Calu3 (cell line): ENCODE measurements at regions of chr19 and their contacts with region 1.

Region 1: GRCh38 chr19:46283771-46284170 is 13.1 kb upstream of the HIF3A start:
- DNase-seq: no peak
- H3K4me3 Mint-ChIP-seq: no peak overlapping the region
- H3K27ac Mint-ChIP-seq: no peak overlapping the region
- H3K4me1 Mint-ChIP-seq: no peaks in the 10 kb centered on the region
- H3K27me3 Mint-ChIP-seq: peaks cover 11% of the 10 kb centered on the region
- CTCF ChIP-seq: no peak

Region 2: DNA sequence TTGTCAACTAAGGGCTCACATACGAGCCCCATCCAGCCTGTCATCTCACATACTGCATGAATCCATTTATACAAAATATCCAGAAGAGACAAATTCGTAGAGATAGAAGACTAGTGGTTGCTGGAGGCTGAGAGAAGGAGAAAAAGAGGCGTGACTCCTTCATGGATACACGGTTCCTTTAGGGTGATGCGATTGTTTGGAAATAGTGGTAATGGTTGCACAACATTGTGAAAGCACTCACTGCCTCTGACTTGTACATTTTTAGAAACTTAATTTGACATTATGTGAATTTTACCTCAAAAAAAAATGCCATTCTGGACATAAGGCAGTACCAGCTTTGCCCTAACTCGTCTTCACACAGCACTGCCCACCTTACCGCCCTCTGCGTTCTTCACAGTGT is 26.9 kb before region 1 on chr19:
- CTCF ChIA-PET with region 1: no interaction called
- intact Hi-C with region 1: no loop called
- DNase-seq: no peak
- H3K4me3 Mint-ChIP-seq: no peak overlapping the region
- H3K27ac Mint-ChIP-seq: no peak overlapping the region
- H3K4me1 Mint-ChIP-seq: peaks cover 9% of the 10 kb centered on the region
- H3K27me3 Mint-ChIP-seq: peaks cover 90% of the 10 kb centered on the region
- CTCF ChIP-seq: no peak

Region 3: DNA sequence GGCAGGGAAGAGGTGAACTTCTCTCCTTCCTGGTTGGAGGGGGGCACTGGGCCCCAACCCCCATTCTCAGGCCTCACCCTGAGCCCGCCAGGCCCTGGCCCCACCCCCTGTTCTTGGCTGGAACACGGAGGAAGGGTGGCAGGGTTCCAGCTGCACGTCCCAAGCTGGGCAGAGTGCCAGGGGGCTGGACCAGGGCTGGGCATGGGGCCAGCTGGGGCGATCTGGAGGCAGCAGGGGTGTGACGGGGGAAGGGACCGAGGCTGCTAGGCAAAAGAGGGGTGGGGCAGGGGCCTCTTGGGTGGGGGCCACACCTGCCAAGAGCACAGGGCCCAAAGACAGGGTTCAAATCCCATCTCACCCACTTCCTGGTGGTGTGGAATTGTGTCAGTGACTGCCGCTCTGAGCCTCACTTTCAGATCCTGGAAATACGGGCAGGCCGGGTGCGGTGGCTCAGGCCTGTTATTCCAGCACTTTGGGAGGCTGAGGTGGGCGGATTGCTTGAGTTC is 15.3 kb after region 1 on chr19:
- CTCF ChIA-PET with region 1: interaction called, 19 read pairs
- intact Hi-C with region 1: no loop called
- DNase-seq: peak; percentile 99
- H3K4me3 Mint-ChIP-seq: peak overlapping the region; percentile 61
- H3K27ac Mint-ChIP-seq: peak overlapping the region; percentile 90
- H3K4me1 Mint-ChIP-seq: peaks cover 30% of the 10 kb centered on the region
- H3K27me3 Mint-ChIP-seq: peaks cover 31% of the 10 kb centered on the region
- CTCF ChIP-seq: no peak

Region 4: DNA sequence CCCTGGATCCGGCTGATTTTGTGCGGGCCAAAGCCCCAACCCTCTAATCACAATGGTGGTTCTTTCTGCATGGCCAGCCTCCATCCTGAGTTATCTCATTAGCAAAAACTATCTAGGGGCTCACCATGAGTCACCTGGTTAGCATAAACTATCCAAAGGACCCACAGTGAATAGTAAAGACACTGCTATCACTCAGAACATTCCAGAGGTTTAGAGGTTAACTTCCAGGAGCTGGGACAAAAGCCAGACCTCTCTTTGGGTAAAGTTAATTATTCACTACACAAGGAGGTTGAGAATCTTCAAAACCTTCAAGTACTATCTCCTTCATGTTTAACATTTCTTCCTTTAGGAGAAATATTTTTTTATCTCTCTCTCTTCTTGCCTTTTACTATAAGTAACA is 44.3 kb after region 1 on chr19:
- CTCF ChIA-PET with region 1: no interaction called
- intact Hi-C with region 1: no loop called
- DNase-seq: no peak
- H3K4me3 Mint-ChIP-seq: no peak overlapping the region
- H3K27ac Mint-ChIP-seq: no peak overlapping the region
- H3K4me1 Mint-ChIP-seq: no peaks in the 10 kb centered on the region
- H3K27me3 Mint-ChIP-seq: peaks cover 17% of the 10 kb centered on the region
- CTCF ChIP-seq: no peak

Region 5: DNA sequence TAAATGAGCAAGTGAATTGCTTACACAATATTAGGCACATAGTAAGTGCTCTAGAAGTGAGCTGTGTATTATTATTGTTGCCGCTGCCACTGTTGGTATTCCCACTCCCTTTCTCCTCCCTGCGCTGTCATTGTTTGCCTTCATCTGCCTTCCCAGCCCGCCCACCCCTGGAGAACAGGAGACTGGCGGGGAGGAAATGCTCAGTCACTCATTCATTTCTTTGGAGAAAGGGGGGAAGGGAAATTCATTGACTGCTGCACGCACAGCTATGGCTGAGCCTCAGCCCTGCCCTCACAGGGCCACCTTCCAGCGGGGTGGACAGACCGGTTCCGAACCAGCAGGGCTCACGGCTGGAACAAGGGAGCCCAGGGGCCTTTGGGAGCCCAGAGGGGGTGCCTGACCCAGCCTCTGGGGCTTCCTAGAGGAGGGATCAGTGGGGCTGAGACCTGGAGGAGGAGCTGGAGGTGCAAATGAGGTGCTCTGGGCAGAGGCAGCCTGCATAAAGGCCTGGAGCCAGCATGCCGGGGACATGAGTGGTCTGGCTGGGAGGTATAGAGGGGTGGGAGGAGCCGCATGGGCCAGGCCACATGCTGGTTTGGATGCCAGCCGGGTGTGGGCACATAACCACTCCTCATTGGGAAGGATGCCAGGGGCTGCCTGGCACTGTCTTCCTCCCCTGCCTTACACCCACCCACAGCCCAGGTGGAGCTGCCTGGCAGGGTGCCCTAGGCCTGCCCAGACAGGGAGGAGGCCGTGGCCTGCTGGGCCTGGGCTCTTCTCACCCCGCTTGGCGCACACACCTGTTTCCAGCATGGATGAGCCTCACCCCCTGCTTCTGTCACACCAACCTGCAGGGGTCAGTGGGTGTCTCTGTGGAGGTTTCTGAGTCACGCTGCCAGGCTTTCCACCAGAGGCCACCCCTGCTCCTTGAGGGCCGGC is 89.9 kb after region 1 on chr19:
- CTCF ChIA-PET with region 1: interaction called, 13 read pairs
- intact Hi-C with region 1: loop called (anchors 2 kb)
- DNase-seq: peak; percentile 99
- H3K4me3 Mint-ChIP-seq: peak overlapping the region; percentile 71
- H3K27ac Mint-ChIP-seq: peak overlapping the region; percentile 90
- H3K4me1 Mint-ChIP-seq: peaks cover 47% of the 10 kb centered on the region
- H3K27me3 Mint-ChIP-seq: no peaks in the 10 kb centered on the region
- CTCF ChIP-seq: no peak

Region 6: GRCh38 chr19:46392243-46392801 is 108.6 kb after region 1 on chr19:
- CTCF ChIA-PET with region 1: interaction called, 5 read pairs
- intact Hi-C with region 1: loop called (anchors 2 kb)
- DNase-seq: no peak
- H3K4me3 Mint-ChIP-seq: no peak overlapping the region
- H3K27ac Mint-ChIP-seq: no peak overlapping the region
- H3K4me1 Mint-ChIP-seq: no peaks in the 10 kb centered on the region
- H3K27me3 Mint-ChIP-seq: no peaks in the 10 kb centered on the region
- CTCF ChIP-seq: no peak

Region 7: GRCh38 chr19:46404055-46404752 is 120.4 kb after region 1 on chr19:
- CTCF ChIA-PET with region 1: interaction called, 4 read pairs
- intact Hi-C with region 1: loop called (anchors 2 kb)
- DNase-seq: peak; percentile 64
- H3K4me3 Mint-ChIP-seq: peak overlapping the region; percentile 80
- H3K27ac Mint-ChIP-seq: peak overlapping the region; percentile 78
- H3K4me1 Mint-ChIP-seq: peaks cover 28% of the 10 kb centered on the region
- H3K27me3 Mint-ChIP-seq: peaks cover 36% of the 10 kb centered on the region
- CTCF ChIP-seq: peak; percentile 46

Region 8: GRCh38 chr19:46487802-46488445 is 204.2 kb after region 1 on chr19:
- CTCF ChIA-PET with region 1: interaction called, 9 read pairs
- intact Hi-C with region 1: loop called (anchors 1 kb)
- DNase-seq: peak; percentile 86
- H3K4me3 Mint-ChIP-seq: peak overlapping the region; percentile 10
- H3K27ac Mint-ChIP-seq: no peak overlapping the region
- H3K4me1 Mint-ChIP-seq: peaks cover 10% of the 10 kb centered on the region
- H3K27me3 Mint-ChIP-seq: peaks cover 85% of the 10 kb centered on the region
- CTCF ChIP-seq: peak; percentile 96

Region 9: DNA sequence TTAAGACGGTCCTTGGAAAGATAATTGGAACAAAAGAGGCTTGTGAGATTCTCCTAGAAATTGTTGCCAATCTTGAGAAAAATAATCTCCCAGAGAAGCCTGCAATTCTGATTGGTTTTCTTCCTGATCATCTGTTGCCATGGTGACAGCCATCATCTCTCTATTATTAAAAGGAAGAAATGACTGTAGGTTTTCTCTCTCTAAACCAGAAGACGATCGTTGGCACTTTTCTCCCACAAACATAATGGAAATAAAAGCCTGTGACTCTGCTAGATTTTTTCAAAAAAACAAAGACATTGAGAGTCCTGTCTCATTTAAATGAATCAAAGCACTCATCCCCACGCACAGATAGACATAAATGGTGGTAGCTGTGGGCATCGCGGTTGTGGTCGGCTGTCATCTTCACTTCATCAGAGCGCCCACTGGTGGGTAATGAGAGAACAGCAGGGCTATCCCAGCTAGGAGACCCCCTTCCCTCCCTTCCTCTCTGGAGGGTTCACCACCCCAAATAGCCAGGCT is 295.6 kb after region 1 on chr19:
- CTCF ChIA-PET with region 1: no interaction called
- intact Hi-C with region 1: no loop called
- DNase-seq: no peak
- H3K4me3 Mint-ChIP-seq: no peak overlapping the region
- H3K27ac Mint-ChIP-seq: peak overlapping the region; percentile 22
- H3K4me1 Mint-ChIP-seq: peaks cover 3% of the 10 kb centered on the region
- H3K27me3 Mint-ChIP-seq: peaks cover 39% of the 10 kb centered on the region
- CTCF ChIP-seq: no peak

Region 10: DNA sequence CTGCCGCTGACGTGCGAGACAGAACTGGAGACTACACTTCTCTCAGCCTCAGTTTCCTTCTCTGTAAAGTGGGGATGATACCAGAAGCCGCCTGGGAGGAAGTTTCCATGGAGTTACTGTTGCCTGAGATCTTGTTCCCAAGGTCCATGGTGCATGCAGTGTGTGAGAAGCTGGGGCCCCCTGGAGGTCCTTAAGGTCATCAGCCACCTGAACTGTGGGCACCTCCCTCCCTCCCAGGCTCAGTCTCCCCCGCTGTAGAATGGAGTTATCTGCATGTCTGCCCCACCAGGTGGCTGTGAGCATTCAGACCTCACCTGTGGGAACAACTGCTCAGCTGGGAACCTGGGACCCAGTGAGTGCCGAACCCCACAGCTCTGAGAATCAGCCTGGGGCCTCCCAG is 1540.6 kb after region 1 on chr19:
- CTCF ChIA-PET with region 1: no interaction called
- intact Hi-C with region 1: no loop called
- DNase-seq: no peak
- H3K4me3 Mint-ChIP-seq: no peak overlapping the region
- H3K27ac Mint-ChIP-seq: no peak overlapping the region
- H3K4me1 Mint-ChIP-seq: no peaks in the 10 kb centered on the region
- H3K27me3 Mint-ChIP-seq: peaks cover 73% of the 10 kb centered on the region
- CTCF ChIP-seq: no peak